ENCODE measurements at regions of chr1 and their contacts with region 1.

Region 1: GRCh38 chr1:40849801-40850592 is 12.2 kb downstream of the CITED4 start:
- DNase-seq: peak; percentile 46
- H3K4me3 ChIP-seq: no peak overlapping the region
- H3K27ac ChIP-seq: no peak overlapping the region
- H3K4me1 ChIP-seq: peaks cover 6% of the 10 kb centered on the region
- H3K27me3 ChIP-seq: no peaks in the 10 kb centered on the region
- CTCF ChIP-seq: peak; percentile 89 to 93

Region 2: GRCh38 chr1:40531381-40532061 is 318.5 kb before region 1 on chr1 and contains the start of gene ZNF684:
- CTCF ChIA-PET with region 1: interaction called, 3 read pairs
- dilution Hi-C with region 1: no loop called
- in situ Hi-C with region 1: no loop called
- intact Hi-C with region 1: loop called (anchors 2 kb)
- DNase-seq: peak; percentile 97
- H3K4me3 ChIP-seq: peak within 1 kb of the TSS; percentile 49 to 68 (median 61)
- H3K27ac ChIP-seq: peak within 1 kb of the TSS; percentile 63
- H3K4me1 ChIP-seq: peaks cover 10% of the 10 kb centered on the region
- H3K27me3 ChIP-seq: no peaks in the 10 kb centered on the region
- CTCF ChIP-seq: no peak
- total RNA-seq, gene ZNF684: 3.7 to 4.1 TPM

Region 3: DNA sequence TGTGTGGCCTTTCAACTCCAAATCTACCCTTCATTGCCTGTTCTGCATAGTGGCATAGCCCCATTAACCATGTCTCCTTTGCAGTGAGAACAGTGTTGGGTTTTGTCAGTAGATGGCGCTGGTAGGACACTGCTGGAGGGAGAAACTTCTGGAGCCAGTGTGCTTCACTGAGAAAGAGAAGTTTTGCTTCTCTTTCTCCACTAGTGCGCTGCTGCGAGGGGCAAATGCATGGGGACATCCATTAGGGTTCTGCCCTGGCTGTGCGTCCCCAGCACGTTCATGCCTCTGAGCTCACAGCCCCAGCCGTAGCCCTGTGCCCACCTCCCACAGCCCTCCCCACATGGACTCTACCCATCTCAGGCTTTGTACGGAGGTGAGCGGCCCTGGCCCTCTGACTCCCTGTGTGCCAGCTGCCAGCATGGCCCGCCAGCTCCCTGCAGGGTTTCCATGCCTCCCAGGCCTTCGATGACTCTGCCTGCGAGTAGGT is 237.6 kb before region 1 on chr1:
- CTCF ChIA-PET with region 1: no interaction called
- dilution Hi-C with region 1: no loop called
- in situ Hi-C with region 1: loop called in 1 of 2 experiments (anchors 10 kb)
- intact Hi-C with region 1: loop called (anchors 1 kb)
- DNase-seq: peak; percentile 68
- H3K4me3 ChIP-seq: peak overlapping the region in 1 of 3 experiments; percentile 16
- H3K27ac ChIP-seq: no peak overlapping the region
- H3K4me1 ChIP-seq: peaks cover 5% of the 10 kb centered on the region
- H3K27me3 ChIP-seq: no peaks in the 10 kb centered on the region
- CTCF ChIP-seq: peak; percentile 97 to 99

Region 4: GRCh38 chr1:40676501-40676900 is 173.5 kb before region 1 on chr1:
- CTCF ChIA-PET with region 1: no interaction called
- dilution Hi-C with region 1: no loop called
- in situ Hi-C with region 1: loop called in 1 of 2 experiments (anchors 10 kb)
- intact Hi-C with region 1: no loop called
- DNase-seq: no peak
- H3K4me3 ChIP-seq: no peak overlapping the region
- H3K27ac ChIP-seq: no peak overlapping the region
- H3K4me1 ChIP-seq: no peaks in the 10 kb centered on the region
- H3K27me3 ChIP-seq: no peaks in the 10 kb centered on the region
- CTCF ChIP-seq: no peak

Region 5: GRCh38 chr1:40862008-40862863 is 12.2 kb after region 1 on chr1 and contains the start of gene CITED4:
- CTCF ChIA-PET with region 1: no interaction called
- dilution Hi-C with region 1: no loop called
- in situ Hi-C with region 1: no loop called
- intact Hi-C with region 1: loop called (anchors 1 kb)
- DNase-seq: peak; percentile 95
- H3K4me3 ChIP-seq: peak within 1 kb of the TSS; percentile 59 to 82 (median 62)
- H3K27ac ChIP-seq: peak within 1 kb of the TSS; percentile 52
- H3K4me1 ChIP-seq: peaks cover 28% of the 10 kb centered on the region
- H3K27me3 ChIP-seq: no peaks in the 10 kb centered on the region
- CTCF ChIP-seq: peak; percentile 36 to 47
- total RNA-seq, gene CITED4: 54.8 to 140 TPM

Region 6: GRCh38 chr1:40951943-40952743 is 102.1 kb after region 1 on chr1:
- CTCF ChIA-PET with region 1: interaction called, 5 read pairs
- dilution Hi-C with region 1: loop called (anchors 5 kb)
- in situ Hi-C with region 1: loop called (anchors 5 kb)
- intact Hi-C with region 1: loop called (anchors 1 kb)
- DNase-seq: peak; percentile 58
- H3K4me3 ChIP-seq: no peak overlapping the region
- H3K27ac ChIP-seq: no peak overlapping the region
- H3K4me1 ChIP-seq: peaks cover 13% of the 10 kb centered on the region
- H3K27me3 ChIP-seq: no peaks in the 10 kb centered on the region
- CTCF ChIP-seq: peak; percentile 92 to 97

Region 7: DNA sequence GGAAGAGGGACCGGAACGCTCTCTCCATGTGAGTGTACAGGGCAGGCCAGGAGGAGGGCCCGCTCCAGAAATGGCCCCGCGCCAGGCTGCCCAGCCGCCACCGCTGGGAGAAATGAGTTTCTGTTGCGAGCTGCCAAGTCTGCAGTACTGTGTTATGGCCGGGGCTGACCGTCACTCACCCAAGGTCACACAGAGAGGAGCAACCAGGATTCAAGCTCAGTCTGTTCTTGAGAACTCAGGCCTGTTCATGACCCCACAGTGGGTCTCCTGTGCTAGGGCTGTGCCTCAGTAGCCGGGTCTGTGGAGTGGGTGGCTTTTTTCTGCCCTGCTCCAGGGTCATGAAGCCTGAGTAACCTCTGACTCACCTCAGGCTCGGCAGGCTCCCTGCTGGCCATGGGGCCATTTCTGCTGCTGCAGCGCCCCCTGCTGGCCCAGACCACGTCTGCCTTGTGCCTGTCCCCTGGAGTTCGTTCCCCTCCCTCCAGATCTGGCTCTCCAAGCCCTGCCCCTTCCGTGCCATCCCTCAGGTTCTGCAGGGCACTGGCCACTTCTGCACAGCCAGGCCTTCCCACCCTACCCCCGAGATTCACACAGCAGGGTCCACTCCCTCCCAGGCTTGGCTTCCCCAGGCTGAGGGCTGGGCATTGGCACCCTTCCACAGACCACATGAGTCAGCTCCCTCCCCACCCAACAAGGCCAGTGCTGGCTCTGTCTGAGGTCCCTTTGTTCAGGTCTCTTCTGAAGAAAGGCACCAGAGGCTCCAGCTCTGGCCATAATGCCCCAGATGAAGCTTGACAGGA is 582.7 kb after region 1 on chr1:
- CTCF ChIA-PET with region 1: no interaction called
- dilution Hi-C with region 1: no loop called
- in situ Hi-C with region 1: no loop called
- intact Hi-C with region 1: loop called (anchors 1 kb)
- DNase-seq: peak; percentile 93
- H3K4me3 ChIP-seq: peak overlapping the region in 1 of 3 experiments; percentile 18
- H3K27ac ChIP-seq: peak overlapping the region; percentile 37
- H3K4me1 ChIP-seq: peaks cover 21% of the 10 kb centered on the region
- H3K27me3 ChIP-seq: no peaks in the 10 kb centered on the region
- CTCF ChIP-seq: peak; percentile 93 to 95